ENCODE measurements at regions of chr3 and their contacts with region 1.

Region 1: GRCh38 chr3:66552846-66553245 is 52.0 kb upstream of the LRIG1 start:
- DNase-seq: no peak
- ATAC-seq: no peak
- H3K4me3 ChIP-seq: no peak overlapping the region
- H3K27ac ChIP-seq: no peak overlapping the region
- H3K4me1 ChIP-seq: no peaks in the 10 kb centered on the region
- H3K27me3 ChIP-seq: no peaks in the 10 kb centered on the region
- CTCF ChIP-seq: no peak
- EP300 ChIP-seq: no peak
- POLR2A ChIP-seq: no peak
- RAD21 ChIP-seq: no peak

Region 2: DNA sequence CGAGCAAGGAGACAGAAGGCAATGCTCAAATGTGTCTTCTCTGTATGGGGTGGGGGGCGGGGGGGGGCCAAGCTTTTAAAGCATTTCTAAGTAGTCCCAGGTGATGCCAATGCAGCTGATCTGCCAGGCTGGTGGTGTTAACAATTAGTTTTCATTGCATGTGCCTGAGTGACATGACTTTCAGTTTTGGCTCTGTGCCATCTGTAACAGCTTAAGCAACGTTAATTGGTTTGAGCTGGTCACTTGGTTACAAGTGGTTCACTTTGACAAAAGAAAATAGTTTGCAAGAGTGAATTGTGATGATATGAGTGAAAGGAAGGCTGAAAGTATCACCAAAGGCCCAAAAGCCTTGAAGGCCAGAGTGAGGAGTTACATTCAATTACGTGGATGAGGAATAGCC is 25.6 kb before region 1 on chr3:
- CTCF ChIA-PET with region 1: no interaction called
- POLR2A ChIA-PET with region 1: no interaction called
- in situ Hi-C with region 1: no loop called
- intact Hi-C with region 1: loop called (anchors 1 kb)
- DNase-seq: no peak
- ATAC-seq: no peak
- H3K4me3 ChIP-seq: no peak overlapping the region
- H3K27ac ChIP-seq: no peak overlapping the region
- H3K4me1 ChIP-seq: no peaks in the 10 kb centered on the region
- H3K27me3 ChIP-seq: no peaks in the 10 kb centered on the region; a peak in 1 of 5 replicates
- CTCF ChIP-seq: no peak
- EP300 ChIP-seq: no peak
- POLR2A ChIP-seq: no peak
- RAD21 ChIP-seq: no peak

Measured in HepG2 (cell line).